H1 (cell line): ENCODE measurements at regions of chr2 and their contacts with region 1.

Region 1: GRCh38 chr2:44879269-44880124 is 62.0 kb upstream of the SIX3 start:
- DNase-seq: no peak
- H3K4me3 ChIP-seq: no peak overlapping the region
- H3K27ac ChIP-seq: no peak overlapping the region
- H3K4me1 ChIP-seq: peaks cover 0 to 8% (median 0%) of the 10 kb centered on the region in 4 experiments; a peak in 3 of 7 replicates
- H3K27me3 ChIP-seq: peaks cover 0 to 5% (median 1%) of the 10 kb centered on the region in 4 experiments; a peak in 3 of 7 replicates
- CTCF ChIP-seq: no peak
- EP300 ChIP-seq: no peak
- POLR2A ChIP-seq: no peak
- RAD21 ChIP-seq: no peak

Region 2: GRCh38 chr2:44897406-44897805 is 17.9 kb after region 1 on chr2:
- CTCF ChIA-PET with region 1: interaction called, 10 read pairs
- POLR2A ChIA-PET with region 1: no interaction called
- DNase-seq: no peak
- H3K4me3 ChIP-seq: no peak overlapping the region
- H3K27ac ChIP-seq: no peak overlapping the region
- H3K4me1 ChIP-seq: no peaks in the 10 kb centered on the region
- H3K27me3 ChIP-seq: no peaks in the 10 kb centered on the region
- CTCF ChIP-seq: peak in 1 of 3 experiments; percentile 31; a peak in 1 of 4 replicates
- EP300 ChIP-seq: no peak
- POLR2A ChIP-seq: no peak
- RAD21 ChIP-seq: peak in 1 of 2 experiments; percentile 48; a peak in 2 of 4 replicates

Region 3: DNA sequence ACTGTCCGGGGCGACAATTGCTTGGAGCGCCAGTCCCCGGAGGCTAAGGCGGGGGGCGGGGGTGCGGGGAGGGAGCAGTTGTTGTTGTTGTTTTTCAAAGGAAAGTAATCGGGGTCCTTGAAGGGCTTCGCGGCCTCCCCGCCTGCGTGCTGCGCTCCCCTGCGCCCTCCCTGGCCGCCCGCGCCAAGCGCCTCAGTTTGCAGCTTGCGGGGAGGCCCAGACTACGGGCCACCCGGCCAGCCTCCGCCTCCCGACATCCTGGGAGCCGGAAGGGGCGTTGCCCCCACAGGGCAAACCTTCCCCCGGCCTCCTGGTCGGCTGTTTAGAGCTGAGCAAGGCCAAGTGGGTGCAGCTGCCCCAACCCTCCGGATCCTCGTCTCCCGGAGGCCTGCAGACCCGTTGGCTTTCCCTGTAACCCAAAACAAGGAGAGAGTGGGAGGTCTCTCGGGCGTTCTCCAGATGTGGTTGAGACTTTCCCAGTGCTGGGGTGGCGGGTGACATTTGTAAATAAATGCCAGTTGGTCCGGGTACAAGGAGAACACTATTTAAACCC is 58.3 kb after region 1 on chr2:
- CTCF ChIA-PET with region 1: no interaction called
- POLR2A ChIA-PET with region 1: no interaction called
- DNase-seq: peak in 1 of 2 experiments; percentile 82
- H3K4me3 ChIP-seq: peak overlapping the region; percentile 41 to 63 (median 51)
- H3K27ac ChIP-seq: no peak overlapping the region
- H3K4me1 ChIP-seq: peaks cover 0 to 74% (median 50%) of the 10 kb centered on the region in 4 experiments; a peak in 6 of 7 replicates
- H3K27me3 ChIP-seq: peaks cover 76 to 99% (median 96%) of the 10 kb centered on the region in 4 experiments; a peak in 6 of 7 replicates
- CTCF ChIP-seq: peak in 2 of 3 experiments; percentile 6 to 10; a peak in 1 of 4 replicates
- EP300 ChIP-seq: no peak
- POLR2A ChIP-seq: no peak
- RAD21 ChIP-seq: peak in 1 of 2 experiments; percentile 32; a peak in 2 of 4 replicates